Activated CD4-positive, alpha-beta T cell treated with anti-CD3 and anti-CD28 coated beads for 36 hours (primary cell): ENCODE measurements at regions of chr9 and their contacts with region 1.

Region 1: DNA sequence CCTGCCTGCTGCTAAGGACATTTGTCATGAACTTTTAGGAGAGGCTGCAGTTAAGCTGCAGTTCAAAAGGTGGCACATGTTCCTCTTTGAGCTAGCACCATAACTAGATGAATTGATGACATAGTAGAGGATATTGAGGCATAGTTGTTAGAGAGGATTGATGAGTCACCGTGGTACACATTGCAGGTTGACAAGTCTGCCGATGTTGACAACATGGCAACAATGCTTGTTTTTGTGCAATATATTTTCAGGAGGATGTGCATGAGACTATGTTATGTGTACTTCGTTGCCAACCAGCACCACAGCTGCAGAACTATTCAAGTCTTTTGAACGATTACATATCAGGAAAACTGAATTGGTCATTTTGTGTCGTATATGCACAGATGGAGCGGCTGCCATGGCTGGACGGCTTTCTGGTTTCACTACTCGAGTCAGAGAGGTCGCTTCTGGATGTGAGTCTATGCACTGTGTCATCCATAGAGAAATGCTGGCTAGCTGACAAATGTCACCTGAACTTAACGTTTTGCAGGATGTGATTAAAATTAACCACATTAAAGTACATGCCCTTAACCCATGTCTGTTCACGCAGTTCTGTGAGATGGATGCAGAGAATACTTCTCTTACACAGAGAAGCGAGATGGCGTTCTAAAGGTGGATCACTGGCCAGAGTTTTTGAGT is 24.2 kb downstream of the ANP32B start:
- DNase-seq: no peak
- ATAC-seq: peak; percentile 67
- H3K4me3 Mint-ChIP-seq: no peak overlapping the region
- H3K27ac Mint-ChIP-seq: peak overlapping the region; percentile 53
- H3K4me1 Mint-ChIP-seq: peaks cover 42% of the 10 kb centered on the region
- H3K27me3 Mint-ChIP-seq: no peaks in the 10 kb centered on the region

Region 2: GRCh38 chr9:97993000-97993399 is 14.4 kb before region 1 on chr9:
- CTCF ChIA-PET with region 1: interaction called, 13 read pairs
- POLR2A ChIA-PET with region 1: interaction called, 4 read pairs
- intact Hi-C with region 1: no loop called
- DNase-seq: no peak
- ATAC-seq: peak; percentile 65
- H3K4me3 Mint-ChIP-seq: no peak overlapping the region
- H3K27ac Mint-ChIP-seq: peak overlapping the region; percentile 68
- H3K4me1 Mint-ChIP-seq: peaks cover 68% of the 10 kb centered on the region
- H3K27me3 Mint-ChIP-seq: no peaks in the 10 kb centered on the region